ENCODE measurements at regions of chr6 and their contacts with region 1.

Region 1: GRCh38 chr6:68343901-68344300 is 291.2 kb upstream of the ADGRB3 start:
- DNase-seq: peak; percentile 80
- H3K4me3 ChIP-seq: no peak overlapping the region
- H3K27ac ChIP-seq: no peak overlapping the region
- H3K4me1 ChIP-seq: no peaks in the 10 kb centered on the region
- H3K27me3 ChIP-seq: no peaks in the 10 kb centered on the region
- CTCF ChIP-seq: peak; percentile 79

Region 2: GRCh38 chr6:68468244-68468884 is 124.5 kb after region 1 on chr6:
- CTCF ChIA-PET with region 1: no interaction called
- POLR2A ChIA-PET with region 1: no interaction called
- intact Hi-C with region 1: loop called (anchors 5 kb)
- DNase-seq: peak; percentile 44
- H3K4me3 ChIP-seq: no peak overlapping the region
- H3K27ac ChIP-seq: no peak overlapping the region
- H3K4me1 ChIP-seq: peaks cover 3% of the 10 kb centered on the region
- H3K27me3 ChIP-seq: no peaks in the 10 kb centered on the region
- CTCF ChIP-seq: peak; percentile 73

Region 3: DNA sequence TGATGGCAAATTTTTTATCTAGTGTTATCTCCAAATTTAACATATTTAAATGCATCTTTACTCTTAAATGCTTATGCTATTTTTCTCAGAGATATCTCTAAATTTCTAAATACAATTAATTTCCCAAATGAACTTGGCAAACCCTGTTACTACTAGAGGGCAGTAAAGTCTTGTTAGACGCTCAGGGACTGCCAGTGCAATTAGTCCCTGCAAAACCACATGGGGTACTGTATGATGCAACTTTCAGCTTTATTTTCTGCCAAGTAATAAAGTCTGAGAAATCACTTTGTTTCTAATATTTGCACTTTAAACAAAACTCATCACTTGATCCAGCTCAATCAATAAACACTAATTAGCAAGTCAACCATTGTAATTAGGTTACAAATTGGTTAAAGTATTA is 215.2 kb after region 1 on chr6:
- CTCF ChIA-PET with region 1: no interaction called
- POLR2A ChIA-PET with region 1: no interaction called
- intact Hi-C with region 1: loop called (anchors 10 kb)
- DNase-seq: peak; percentile 79
- H3K4me3 ChIP-seq: peak overlapping the region; percentile 38
- H3K27ac ChIP-seq: peak overlapping the region; percentile 87
- H3K4me1 ChIP-seq: peaks cover 23% of the 10 kb centered on the region
- H3K27me3 ChIP-seq: no peaks in the 10 kb centered on the region
- CTCF ChIP-seq: peak; percentile 69; the same call in 1 of the 2 replicates

Region 4: DNA sequence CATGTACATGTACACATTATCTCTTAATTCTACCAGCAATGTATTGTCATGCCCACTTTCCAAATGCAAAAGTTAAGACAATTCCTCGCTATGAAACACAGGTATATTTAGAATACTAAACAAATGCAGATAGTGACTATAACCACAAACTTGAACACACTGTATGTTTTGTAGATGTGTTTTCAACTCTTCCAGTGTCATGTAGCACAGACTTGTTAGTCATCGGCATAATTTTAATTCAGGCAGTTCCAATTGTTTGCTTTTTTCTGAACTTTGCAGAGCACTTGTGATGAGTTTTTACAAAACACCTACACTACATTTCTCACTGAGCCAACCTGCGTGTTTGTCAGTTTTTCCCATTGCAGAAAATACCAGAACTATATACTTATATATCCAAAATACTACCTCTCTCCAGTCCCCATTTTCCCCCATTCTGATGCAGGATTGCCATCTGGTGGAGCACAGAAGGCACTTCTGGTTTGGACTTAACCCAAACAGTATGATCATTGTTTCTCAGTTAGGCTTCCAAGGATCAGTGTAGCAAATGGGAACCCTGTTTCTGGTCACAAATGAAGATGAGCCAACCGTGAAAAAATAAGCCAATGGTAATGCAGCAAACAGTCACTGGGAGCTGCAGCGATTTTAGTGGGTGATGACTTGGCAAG is 434.6 kb after region 1 on chr6:
- CTCF ChIA-PET with region 1: interaction called, 7 read pairs
- POLR2A ChIA-PET with region 1: no interaction called
- intact Hi-C with region 1: loop called (anchors 1 kb)
- DNase-seq: peak; percentile 87
- H3K4me3 ChIP-seq: no peak overlapping the region
- H3K27ac ChIP-seq: no peak overlapping the region
- H3K4me1 ChIP-seq: peaks cover 41% of the 10 kb centered on the region
- H3K27me3 ChIP-seq: no peaks in the 10 kb centered on the region
- CTCF ChIP-seq: peak; percentile 90

Measured in A673 (cell line).